CD4-positive, alpha-beta T cell (primary cell): ENCODE measurements at regions of chr21 and their contacts with region 1.

Region 1: DNA sequence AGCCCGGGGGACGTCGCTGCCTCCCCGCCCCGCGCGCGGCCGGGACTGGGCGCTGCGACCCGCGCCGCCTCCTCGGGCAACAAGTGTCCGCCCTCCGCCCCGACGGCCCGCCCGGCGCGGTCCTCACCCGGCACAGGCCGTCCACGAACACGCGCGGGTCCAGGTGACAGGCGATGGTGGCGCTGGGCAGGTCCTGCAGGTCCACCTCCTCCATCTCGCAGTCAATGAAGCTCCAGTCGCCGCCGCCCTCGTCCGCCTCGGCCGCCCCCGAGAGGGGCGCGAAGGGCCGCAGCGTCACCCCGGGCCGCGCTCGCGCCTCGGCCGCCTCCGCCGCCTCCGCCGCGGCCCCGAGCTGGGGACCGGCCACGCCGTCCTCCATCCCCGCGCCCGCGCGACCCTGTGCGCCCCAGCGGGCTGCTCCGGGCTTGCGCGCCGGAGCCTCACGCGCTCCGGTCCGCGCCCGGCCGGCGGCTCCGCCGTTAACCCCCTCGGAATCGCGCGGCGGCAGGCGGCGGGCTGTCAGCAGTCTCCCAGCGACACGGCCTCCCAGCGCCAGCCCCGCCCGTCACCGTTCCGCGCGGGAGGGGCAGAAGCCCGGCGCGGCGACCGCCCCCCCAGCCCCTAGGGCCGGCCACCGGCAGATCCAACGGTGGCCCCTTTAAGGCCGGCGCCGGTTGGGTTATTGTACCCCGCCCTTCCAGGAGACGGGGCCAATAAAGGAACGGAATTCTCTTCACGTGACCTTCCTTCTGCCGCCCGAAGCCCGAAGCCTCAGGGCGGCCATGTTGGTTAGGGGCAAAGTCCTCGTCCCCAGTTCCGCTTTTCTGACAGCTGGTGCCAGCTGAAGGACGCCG is at the start of gene RCAN1:
- DNase-seq: peak; percentile 70 to 94 (median 79)
- ATAC-seq: peak; percentile 97
- H3K4me3 ChIP-seq: peak within 1 kb of the TSS; percentile 67
- H3K4me3 Mint-ChIP-seq: peak within 1 kb of the TSS; percentile 95
- H3K27ac ChIP-seq: peak within 1 kb of the TSS; percentile 55 to 61
- H3K27ac Mint-ChIP-seq: peak within 1 kb of the TSS; percentile 87
- H3K4me1 ChIP-seq: peaks cover 12% of the 10 kb centered on the region
- H3K4me1 Mint-ChIP-seq: peaks cover 30% of the 10 kb centered on the region
- H3K27me3 ChIP-seq: no peaks in the 10 kb centered on the region
- H3K27me3 Mint-ChIP-seq: no peaks in the 10 kb centered on the region
- CTCF ChIP-seq: no peak
- total RNA-seq, gene RCAN1: 1.1 to 1.5 TPM

Region 2: DNA sequence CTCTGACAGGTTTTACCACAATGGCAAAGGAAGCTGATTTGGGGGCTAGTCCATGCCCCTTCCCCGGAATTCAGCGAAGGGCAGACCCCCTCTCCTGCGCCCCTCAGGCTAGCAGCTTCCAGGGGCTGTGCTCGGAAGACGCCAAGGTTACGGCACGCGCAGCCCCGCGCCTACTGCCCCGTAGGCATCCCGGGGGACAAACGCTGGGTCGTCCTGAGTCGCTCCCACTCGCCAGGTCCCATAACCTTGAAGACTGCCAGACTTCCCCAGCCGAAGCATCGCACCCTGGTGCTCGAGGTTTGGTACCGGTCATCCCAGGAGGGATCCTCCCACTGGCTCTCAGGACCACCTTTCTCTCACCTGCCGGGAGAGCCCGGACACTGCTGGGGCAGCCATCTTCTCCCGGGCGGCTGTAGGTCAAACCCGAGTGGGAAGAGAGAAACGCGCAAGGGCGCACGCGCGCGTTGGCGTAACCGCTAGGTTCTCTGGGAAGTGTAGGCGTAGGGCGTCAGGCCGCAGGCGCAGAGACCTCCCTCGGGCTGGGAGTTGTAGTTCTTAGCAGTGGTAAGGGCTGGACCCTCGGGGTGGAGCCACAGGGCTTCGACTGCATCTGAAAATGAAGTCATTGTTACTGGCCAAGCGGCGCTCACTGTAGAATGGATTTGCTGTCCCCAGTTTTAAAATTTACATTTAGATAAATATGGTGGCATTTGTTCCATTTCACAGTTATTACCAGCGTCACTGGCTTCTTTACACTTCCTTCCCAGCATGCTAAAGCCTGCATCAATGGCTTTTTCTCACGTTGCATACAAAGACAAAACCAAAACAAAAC is 699.3 kb before region 1 on chr21 and contains the start of gene ATP5PO:
- CTCF ChIA-PET with region 1: no interaction called
- POLR2A ChIA-PET with region 1: no interaction called
- intact Hi-C with region 1: loop called in 1 of 2 experiments (anchors 1 kb)
- DNase-seq: peak; percentile 89 to 98 (median 94)
- ATAC-seq: peak; percentile 99
- H3K4me3 ChIP-seq: peak within 1 kb of the TSS; percentile 75
- H3K4me3 Mint-ChIP-seq: peak within 1 kb of the TSS; percentile 97
- H3K27ac ChIP-seq: peak within 1 kb of the TSS; percentile 37 to 66
- H3K27ac Mint-ChIP-seq: peak within 1 kb of the TSS; percentile 92
- H3K4me1 ChIP-seq: peaks cover 19% of the 10 kb centered on the region
- H3K4me1 Mint-ChIP-seq: peaks cover 38% of the 10 kb centered on the region
- H3K27me3 ChIP-seq: no peaks in the 10 kb centered on the region
- H3K27me3 Mint-ChIP-seq: no peaks in the 10 kb centered on the region
- CTCF ChIP-seq: no peak
- total RNA-seq, gene ATP5PO: 143 to 149 TPM

Region 3: DNA sequence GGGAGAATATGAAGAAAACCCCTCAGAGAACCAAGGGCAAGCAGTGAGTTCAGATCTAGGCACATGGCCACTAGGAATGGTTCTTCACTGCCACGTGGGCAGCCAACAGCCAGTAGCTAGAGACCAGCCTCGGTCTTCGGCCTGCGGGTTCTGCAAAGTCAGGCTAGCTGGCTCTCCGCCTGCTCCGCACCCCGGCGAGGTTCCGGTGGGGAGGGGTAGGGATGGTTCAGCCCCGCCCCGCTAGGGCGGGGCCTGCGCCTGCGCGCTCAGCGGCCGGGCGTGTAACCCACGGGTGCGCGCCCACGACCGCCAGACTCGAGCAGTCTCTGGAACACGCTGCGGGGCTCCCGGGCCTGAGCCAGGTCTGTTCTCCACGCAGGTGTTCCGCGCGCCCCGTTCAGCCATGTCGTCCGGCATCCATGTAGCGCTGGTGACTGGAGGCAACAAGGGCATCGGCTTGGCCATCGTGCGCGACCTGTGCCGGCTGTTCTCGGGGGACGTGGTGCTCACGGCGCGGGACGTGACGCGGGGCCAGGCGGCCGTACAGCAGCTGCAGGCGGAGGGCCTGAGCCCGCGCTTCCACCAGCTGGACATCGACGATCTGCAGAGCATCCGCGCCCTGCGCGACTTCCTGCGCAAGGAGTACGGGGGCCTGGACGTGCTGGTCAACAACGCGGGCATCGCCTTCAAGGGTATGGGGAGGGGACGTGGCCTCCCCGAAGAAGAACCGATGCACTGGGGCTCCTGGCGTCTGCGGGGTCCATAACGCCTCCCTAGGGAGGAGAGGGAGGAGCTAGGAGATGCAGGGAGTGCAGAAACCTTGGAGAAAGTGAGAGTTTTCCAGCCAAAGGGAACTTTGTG is 1455.1 kb after region 1 on chr21 and contains the start of gene CBR1:
- CTCF ChIA-PET with region 1: no interaction called
- POLR2A ChIA-PET with region 1: no interaction called
- intact Hi-C with region 1: loop called in 1 of 2 experiments (anchors 5 kb)
- DNase-seq: peak; percentile 76 to 95 (median 87)
- ATAC-seq: peak; percentile 99
- H3K4me3 ChIP-seq: peak within 1 kb of the TSS; percentile 76
- H3K4me3 Mint-ChIP-seq: peak within 1 kb of the TSS; percentile 79
- H3K27ac ChIP-seq: peak within 1 kb of the TSS; percentile 44 to 51
- H3K27ac Mint-ChIP-seq: peak within 1 kb of the TSS; percentile 78
- H3K4me1 ChIP-seq: peaks cover 38% of the 10 kb centered on the region
- H3K4me1 Mint-ChIP-seq: peaks cover 45% of the 10 kb centered on the region
- H3K27me3 ChIP-seq: no peaks in the 10 kb centered on the region
- H3K27me3 Mint-ChIP-seq: no peaks in the 10 kb centered on the region
- CTCF ChIP-seq: no peak
- total RNA-seq, gene CBR1: 5.2 to 6.8 TPM